GM12878 (cell line): ENCODE measurements at regions of chr6 and their contacts with region 1.

Region 1: DNA sequence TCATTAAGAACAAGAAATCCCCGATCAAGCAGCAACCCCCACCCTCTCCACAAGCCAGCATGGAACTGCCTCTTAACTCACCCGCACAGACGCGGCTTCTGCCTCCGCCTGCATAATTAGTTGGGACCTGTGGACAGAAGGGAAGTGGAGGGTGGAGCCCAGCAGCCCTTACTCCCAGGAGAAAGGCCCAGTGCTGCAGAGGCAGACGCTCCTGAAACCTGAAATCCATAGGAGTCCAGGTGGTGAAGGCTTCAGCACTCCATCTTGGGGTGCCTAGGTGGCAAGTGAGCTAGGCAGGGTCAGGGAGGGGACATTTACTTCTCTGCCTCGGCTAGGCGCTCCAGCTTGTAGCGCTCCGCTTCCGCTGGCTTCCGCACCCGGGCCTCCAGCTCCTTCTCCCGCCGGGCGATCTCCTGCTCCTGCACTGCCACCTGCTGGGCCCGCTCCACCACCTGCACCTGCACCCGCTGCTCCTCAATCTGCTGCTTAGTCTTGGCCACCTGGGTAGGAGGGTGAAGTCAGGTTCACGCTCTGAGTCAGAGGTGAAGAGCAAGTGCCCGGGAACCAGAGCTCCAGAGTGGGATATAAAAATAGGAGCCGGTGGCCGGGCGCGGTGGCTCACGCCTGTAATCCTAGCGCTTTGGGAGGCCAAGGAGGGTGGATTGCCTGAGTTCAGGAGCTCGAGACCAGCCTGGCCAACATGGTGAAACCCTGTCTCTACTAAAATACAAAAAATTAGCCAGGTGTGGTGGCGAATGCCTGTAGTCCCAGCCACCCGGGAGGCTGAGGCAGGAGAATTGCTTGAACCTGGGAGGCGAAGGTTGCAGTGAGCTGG is 10.7 kb downstream of the TUBB start:
- DNase-seq: no peak
- ATAC-seq: peak; percentile 87
- H3K4me3 ChIP-seq: no peak overlapping the region
- H3K27ac ChIP-seq: peak overlapping the region; percentile 32; the same call in 1 of the 2 replicates
- H3K4me1 ChIP-seq: peaks cover 13% of the 10 kb centered on the region
- H3K27me3 ChIP-seq: no peaks in the 10 kb centered on the region
- CTCF ChIP-seq: peak; percentile 83 to 96 (median 90)
- EP300 ChIP-seq: no peak
- POLR2A ChIP-seq: peak; percentile 42; the same call in 1 of the 2 replicates
- RAD21 ChIP-seq: peak; percentile 83

Region 2: GRCh38 chr6:30541515-30542403 is 189.1 kb before region 1 on chr6:
- CTCF ChIA-PET with region 1: interaction called, 25 read pairs
- POLR2A ChIA-PET with region 1: no interaction called
- RAD21 ChIA-PET with region 1: interaction called, 14 read pairs
- SMC1A ChIA-PET with region 1: interaction called, 12 read pairs
- in situ Hi-C with region 1: no loop called
- intact Hi-C with region 1: loop called (anchors 5 kb)
- DNase-seq: peak; percentile 62
- ATAC-seq: peak; percentile 88
- H3K4me3 ChIP-seq: peak overlapping the region; percentile 60
- H3K27ac ChIP-seq: no peak overlapping the region
- H3K4me1 ChIP-seq: peaks cover 7% of the 10 kb centered on the region; the same call in 1 of the 2 replicates
- H3K27me3 ChIP-seq: no peaks in the 10 kb centered on the region
- CTCF ChIP-seq: peak; percentile 94 to 99 (median 96)
- EP300 ChIP-seq: no peak
- POLR2A ChIP-seq: no peak
- RAD21 ChIP-seq: peak; percentile 68

Region 3: GRCh38 chr6:30672445-30673253 is 58.2 kb before region 1 on chr6 and contains the start of gene DHX16:
- CTCF ChIA-PET with region 1: interaction called, 487 read pairs
- POLR2A ChIA-PET with region 1: interaction called, 6 read pairs
- RAD21 ChIA-PET with region 1: interaction called, 232 read pairs
- SMC1A ChIA-PET with region 1: interaction called, 265 read pairs
- in situ Hi-C with region 1: no loop called
- intact Hi-C with region 1: no loop called
- DNase-seq: peak; percentile 90
- ATAC-seq: peak; percentile 90
- H3K4me3 ChIP-seq: peak within 1 kb of the TSS; percentile 99
- H3K27ac ChIP-seq: peak within 1 kb of the TSS; percentile 79
- H3K4me1 ChIP-seq: peaks cover 8% of the 10 kb centered on the region
- H3K27me3 ChIP-seq: no peaks in the 10 kb centered on the region
- CTCF ChIP-seq: peak; percentile 77 to 93 (median 88); a peak in 5 of 6 replicates
- EP300 ChIP-seq: no peak
- POLR2A ChIP-seq: peak; percentile 70
- RAD21 ChIP-seq: peak; percentile 64
- polyA plus RNA-seq, gene DHX16: 10.1 to 17.7 TPM

Region 4: GRCh38 chr6:30717042-30717844 is 13.6 kb before region 1 on chr6 and contains the start of gene MDC1:
- CTCF ChIA-PET with region 1: interaction called, 41 read pairs
- POLR2A ChIA-PET with region 1: interaction called, 19 read pairs
- RAD21 ChIA-PET with region 1: interaction called, 31 read pairs
- SMC1A ChIA-PET with region 1: interaction called, 37 read pairs
- in situ Hi-C with region 1: no loop called
- intact Hi-C with region 1: no loop called
- DNase-seq: peak; percentile 99
- ATAC-seq: peak; percentile 76
- H3K4me3 ChIP-seq: peak within 1 kb of the TSS; percentile 83
- H3K27ac ChIP-seq: peak within 1 kb of the TSS; percentile 98
- H3K4me1 ChIP-seq: peaks cover 16% of the 10 kb centered on the region
- H3K27me3 ChIP-seq: no peaks in the 10 kb centered on the region
- CTCF ChIP-seq: peak; percentile 8 to 29 (median 17); a peak in 3 of 6 replicates
- EP300 ChIP-seq: peak; percentile 39 to 52; a peak in 1 of 4 replicates
- POLR2A ChIP-seq: peak; percentile 80
- RAD21 ChIP-seq: no peak; the same call in 1 of the 2 replicates
- polyA plus RNA-seq, gene MDC1: 5.1 to 6.5 TPM

Region 5: GRCh38 chr6:30759575-30760239 is 28.9 kb after region 1 on chr6:
- CTCF ChIA-PET with region 1: interaction called, 6 read pairs
- POLR2A ChIA-PET with region 1: interaction called, 41 read pairs
- RAD21 ChIA-PET with region 1: interaction called, 60 read pairs
- SMC1A ChIA-PET with region 1: interaction called, 122 read pairs
- in situ Hi-C with region 1: no loop called
- intact Hi-C with region 1: no loop called
- DNase-seq: no peak
- ATAC-seq: no peak
- H3K4me3 ChIP-seq: no peak overlapping the region
- H3K27ac ChIP-seq: peak overlapping the region; percentile 35; the same call in 1 of the 2 replicates
- H3K4me1 ChIP-seq: peaks cover 22% of the 10 kb centered on the region; the same call in 1 of the 2 replicates
- H3K27me3 ChIP-seq: no peaks in the 10 kb centered on the region
- CTCF ChIP-seq: no peak
- EP300 ChIP-seq: no peak
- POLR2A ChIP-seq: no peak
- RAD21 ChIP-seq: no peak

Region 6: GRCh38 chr6:30821862-30822782 is 91.3 kb after region 1 on chr6:
- CTCF ChIA-PET with region 1: interaction called, 40 read pairs
- POLR2A ChIA-PET with region 1: interaction called, 6 read pairs
- RAD21 ChIA-PET with region 1: interaction called, 45 read pairs
- SMC1A ChIA-PET with region 1: interaction called, 19 read pairs
- in situ Hi-C with region 1: no loop called
- intact Hi-C with region 1: no loop called
- DNase-seq: no peak
- ATAC-seq: peak; percentile 52
- H3K4me3 ChIP-seq: no peak overlapping the region
- H3K27ac ChIP-seq: peak overlapping the region; percentile 42
- H3K4me1 ChIP-seq: peaks cover 21% of the 10 kb centered on the region
- H3K27me3 ChIP-seq: no peaks in the 10 kb centered on the region
- CTCF ChIP-seq: peak; percentile 50 to 61 (median 52); a peak in 5 of 6 replicates
- EP300 ChIP-seq: 0 out of 4 replicates have a peak, but pooled peaks of 1 of the 2 experiments have one; percentile 15
- POLR2A ChIP-seq: no peak
- RAD21 ChIP-seq: peak; percentile 54